Heart left ventricle (tissue), 16 donors: ENCODE measurements at regions of chr2 and their contacts with region 1.

Region 1: DNA sequence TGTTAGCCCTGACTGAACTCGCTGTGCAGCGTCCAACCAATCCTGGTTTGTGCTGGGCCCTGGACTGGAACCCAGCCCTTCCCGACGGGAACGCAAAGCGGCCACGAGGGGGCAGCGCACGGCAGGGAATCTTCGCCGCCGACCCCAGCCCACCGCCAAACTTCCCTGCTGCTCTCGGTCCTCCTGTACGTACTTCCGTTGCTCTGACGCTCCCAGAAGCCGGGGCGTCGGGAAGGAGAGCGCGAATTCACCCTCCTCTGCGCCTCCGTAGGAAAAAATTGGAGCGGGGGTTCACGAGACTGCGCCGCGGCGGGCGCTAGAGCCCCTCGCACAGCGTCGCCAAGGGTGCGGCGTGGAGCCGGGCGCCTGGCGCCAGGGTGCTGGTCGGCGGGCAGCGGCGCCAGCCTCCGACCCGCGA is 948 bp upstream of the SH3RF3 start:
- DNase-seq: peak; percentile 80 to 90 (median 86)
- ATAC-seq: peak; percentile 75 to 91 (median 89)
- H3K4me3 ChIP-seq: peak overlapping the region; percentile 64 to 80 (median 73)
- H3K27ac ChIP-seq: peak overlapping the region; percentile 55 to 86 (median 78)
- H3K4me1 ChIP-seq: peaks cover 0 to 35% (median 18%) of the 10 kb centered on the region in 12 donors
- H3K27me3 ChIP-seq: peaks cover 0 to 15% (median 0%) of the 10 kb centered on the region in 9 donors
- CTCF ChIP-seq: peak; percentile 82 to 97 (median 94)
- POLR2A ChIP-seq: no peak

Region 2: GRCh38 chr2:108960006-108960405 is 168.1 kb before region 1 on chr2:
- intact Hi-C with region 1: no loop called
- DNase-seq: no peak
- ATAC-seq: no peak
- H3K4me3 ChIP-seq: no peak overlapping the region
- H3K27ac ChIP-seq: no peak overlapping the region
- H3K4me1 ChIP-seq: peaks cover 0 to 25% (median 0%) of the 10 kb centered on the region in 12 donors
- H3K27me3 ChIP-seq: no peaks in the 10 kb centered on the region
- CTCF ChIP-seq: no peak
- POLR2A ChIP-seq: no peak

Region 3: GRCh38 chr2:109031476-109032228 is 96.4 kb before region 1 on chr2:
- intact Hi-C with region 1: no loop called
- DNase-seq: peak; percentile 24 to 75 (median 48)
- ATAC-seq: peak in 3 of 4 donors; percentile 70 to 80 (median 74)
- H3K4me3 ChIP-seq: peak overlapping the region; percentile 7 to 63 (median 52)
- H3K27ac ChIP-seq: peak overlapping the region in 1 of 12 donors; percentile 87
- H3K4me1 ChIP-seq: peaks cover 0 to 25% (median 5%) of the 10 kb centered on the region in 12 donors
- H3K27me3 ChIP-seq: peaks cover 0 to 6% (median 0%) of the 10 kb centered on the region in 9 donors
- CTCF ChIP-seq: peak in 1 of 12 donors; percentile 14
- POLR2A ChIP-seq: no peak

Region 4: DNA sequence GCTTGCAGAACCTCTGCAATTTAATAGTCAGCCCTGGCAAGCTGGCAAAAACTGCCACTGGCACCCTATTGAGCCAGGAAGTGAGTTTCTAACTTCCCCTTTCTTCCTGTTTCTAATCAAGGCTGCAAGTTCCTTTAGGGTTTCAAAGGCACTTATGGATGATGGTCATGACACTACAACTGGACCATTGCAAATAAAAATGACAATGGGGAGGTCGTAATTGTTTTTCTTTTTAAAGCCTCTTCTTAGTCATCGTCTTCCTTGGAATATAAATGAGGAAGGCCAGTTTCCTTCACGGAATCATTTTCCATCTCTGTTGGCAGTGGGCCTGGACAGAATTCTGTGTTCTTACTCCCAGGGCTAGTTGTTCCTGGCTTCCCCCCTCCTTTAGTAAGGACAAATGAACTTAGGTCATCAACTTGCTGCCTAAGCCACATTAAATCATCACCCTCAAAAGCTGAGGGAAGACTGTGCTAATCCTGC is 36.7 kb after region 1 on chr2:
- intact Hi-C with region 1: loop called in 3 of 10 experiments (anchors 2 to 5 kb)
- DNase-seq: peak in 3 of 5 donors; percentile 49 to 64 (median 51)
- ATAC-seq: peak in 3 of 4 donors; percentile 25 to 62 (median 33)
- H3K4me3 ChIP-seq: no peak overlapping the region
- H3K27ac ChIP-seq: peak overlapping the region in 8 of 12 donors; percentile 0 to 26 (median 10)
- H3K4me1 ChIP-seq: peaks cover 0 to 41% (median 24%) of the 10 kb centered on the region in 12 donors
- H3K27me3 ChIP-seq: no peaks in the 10 kb centered on the region
- CTCF ChIP-seq: no peak
- POLR2A ChIP-seq: no peak

Region 5: DNA sequence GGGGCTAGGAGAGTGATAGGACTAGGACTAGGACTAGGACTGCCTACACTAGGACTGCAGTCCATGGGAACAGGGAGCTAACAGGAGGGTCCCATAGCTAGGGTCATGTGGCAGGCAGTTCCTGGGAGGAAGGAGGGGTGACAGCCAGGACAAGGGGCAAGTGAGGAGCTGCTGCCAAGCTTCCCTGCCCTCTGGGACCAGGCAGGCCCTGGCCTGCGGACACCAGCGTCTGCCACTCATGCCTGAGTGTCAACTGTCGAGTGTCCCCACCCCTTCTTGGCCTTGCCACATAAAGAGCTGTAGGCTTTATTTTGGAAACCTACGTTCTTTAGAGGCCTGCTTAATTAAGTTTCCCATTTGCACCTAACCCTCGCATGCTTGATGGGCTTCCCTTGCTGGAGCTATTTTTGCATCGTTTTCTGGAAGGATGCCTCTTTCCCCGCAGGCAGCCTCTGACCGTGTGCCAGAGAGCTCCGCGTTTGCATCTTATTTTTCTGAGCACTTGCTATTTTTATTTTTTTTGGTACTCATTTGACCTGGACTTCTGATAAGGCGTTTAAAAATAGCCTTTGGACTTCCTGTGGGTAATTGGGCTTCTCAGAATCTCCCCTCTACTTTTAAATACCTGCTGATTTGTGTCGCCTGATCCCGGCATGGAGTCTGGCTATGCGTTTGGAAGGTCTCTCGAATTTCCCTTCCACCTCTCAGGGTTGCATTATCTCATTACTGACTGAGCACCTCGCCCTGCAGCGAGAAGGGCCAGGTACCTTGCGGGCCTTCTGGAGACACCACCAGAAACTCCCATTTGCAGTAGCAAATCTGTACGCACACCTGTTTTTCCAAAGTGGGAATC is 67.4 kb after region 1 on chr2:
- intact Hi-C with region 1: loop called in 4 of 10 experiments (anchors 2 to 10 kb)
- DNase-seq: peak in 4 of 5 donors; percentile 49 to 75 (median 62)
- ATAC-seq: peak; percentile 66 to 87 (median 82)
- H3K4me3 ChIP-seq: no peak overlapping the region
- H3K27ac ChIP-seq: peak overlapping the region in 11 of 12 donors; percentile 50 to 76 (median 61)
- H3K4me1 ChIP-seq: peaks cover 4 to 57% (median 34%) of the 10 kb centered on the region in 12 donors
- H3K27me3 ChIP-seq: no peaks in the 10 kb centered on the region
- CTCF ChIP-seq: no peak
- POLR2A ChIP-seq: no peak

Region 6: DNA sequence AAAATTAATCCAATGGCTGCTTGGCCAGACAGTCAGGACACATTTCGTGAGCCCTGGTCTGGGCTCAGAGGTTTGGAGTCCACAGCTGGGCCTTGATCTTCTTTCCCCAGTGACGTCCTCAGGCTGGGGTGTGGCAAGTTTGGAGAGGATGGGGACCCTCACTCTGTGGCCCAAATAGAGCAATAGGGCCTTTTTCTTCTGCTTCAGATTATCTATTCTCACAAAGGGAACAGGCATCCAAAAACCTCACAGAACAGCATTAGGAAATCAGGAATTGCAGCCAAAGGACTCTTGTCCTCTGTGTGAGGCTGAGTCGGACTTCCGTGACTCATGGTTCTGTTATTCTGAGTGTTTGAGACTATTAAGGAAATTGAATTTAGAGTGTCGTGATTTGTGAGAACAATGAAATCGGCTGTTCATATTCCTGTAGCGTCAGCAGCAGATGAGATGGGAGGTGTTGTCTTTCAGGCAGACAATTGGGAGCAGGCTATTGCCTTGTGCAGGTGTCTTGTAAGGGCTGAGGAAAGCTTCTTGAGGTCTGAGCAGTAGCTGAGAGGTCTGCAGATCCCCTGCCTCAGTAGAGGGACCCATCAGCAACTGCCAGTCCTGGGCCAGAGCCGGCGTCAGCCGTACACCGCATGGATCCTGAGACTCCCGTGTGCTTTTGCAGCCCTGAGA is 114.7 kb after region 1 on chr2:
- intact Hi-C with region 1: loop called in 1 of 10 experiments (anchors 10 kb)
- DNase-seq: peak in 1 of 5 donors; percentile 50
- ATAC-seq: peak in 3 of 4 donors; percentile 52 to 83 (median 64)
- H3K4me3 ChIP-seq: no peak overlapping the region
- H3K27ac ChIP-seq: peak overlapping the region; percentile 40 to 92 (median 80)
- H3K4me1 ChIP-seq: peaks cover 17 to 80% (median 56%) of the 10 kb centered on the region in 12 donors
- H3K27me3 ChIP-seq: no peaks in the 10 kb centered on the region
- CTCF ChIP-seq: no peak
- POLR2A ChIP-seq: no peak

Region 7: GRCh38 chr2:109318150-109318948 is 190.3 kb after region 1 on chr2:
- intact Hi-C with region 1: loop called in 3 of 10 experiments (anchors 2 to 10 kb)
- DNase-seq: peak; percentile 59 to 90 (median 80)
- ATAC-seq: peak; percentile 40 to 76 (median 70)
- H3K4me3 ChIP-seq: peak overlapping the region in 7 of 12 donors; percentile 7 to 28 (median 14)
- H3K27ac ChIP-seq: peak overlapping the region; percentile 58 to 81 (median 74)
- H3K4me1 ChIP-seq: peaks cover 22 to 61% (median 46%) of the 10 kb centered on the region in 12 donors
- H3K27me3 ChIP-seq: no peaks in the 10 kb centered on the region
- CTCF ChIP-seq: peak in 7 of 12 donors; percentile 12 to 45 (median 14)
- POLR2A ChIP-seq: no peak

Region 8: DNA sequence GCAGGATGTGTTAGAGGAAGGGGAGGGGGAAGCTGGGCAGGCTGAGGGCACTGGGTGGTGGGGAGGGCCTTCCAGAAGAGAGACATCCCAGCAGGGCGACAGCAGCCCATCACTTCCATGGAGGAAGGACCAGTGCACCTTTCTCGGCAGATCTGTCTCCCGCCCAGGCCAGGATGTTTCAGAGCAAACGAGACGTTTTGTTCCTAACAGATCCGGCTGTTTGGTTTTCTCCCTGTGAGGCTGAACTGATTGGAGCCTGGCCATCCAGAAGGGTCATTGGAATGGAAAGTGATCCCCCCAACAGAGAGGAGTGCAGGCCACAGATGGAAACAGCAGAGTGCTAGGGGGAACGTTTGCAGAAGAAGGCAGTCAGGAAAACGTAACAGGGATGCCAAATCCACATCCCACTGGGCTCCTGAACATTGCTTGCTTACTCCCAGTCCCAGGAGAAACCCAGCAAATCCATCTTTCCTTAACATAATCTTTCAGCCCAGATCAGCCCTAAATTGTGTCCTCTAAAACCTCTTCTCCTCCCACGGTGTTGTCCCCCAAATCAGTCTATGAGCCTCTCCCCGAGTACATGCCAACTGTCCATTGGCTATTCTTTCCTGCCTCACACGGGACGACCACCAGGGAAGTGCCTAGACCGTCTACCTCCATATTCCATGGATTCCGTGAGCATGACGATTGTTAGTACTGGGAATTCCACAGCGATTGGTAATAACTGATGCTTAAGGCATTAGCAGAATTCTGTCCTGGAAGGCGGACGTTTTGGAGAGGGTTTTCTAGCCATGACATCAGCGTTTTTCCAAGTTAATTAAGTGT is 358.9 kb after region 1 on chr2:
- intact Hi-C with region 1: loop called in 1 of 10 experiments (anchors 5 kb)
- DNase-seq: peak in 2 of 5 donors; percentile 12 to 19
- ATAC-seq: no peak
- H3K4me3 ChIP-seq: no peak overlapping the region
- H3K27ac ChIP-seq: no peak overlapping the region
- H3K4me1 ChIP-seq: peaks cover 0 to 24% (median 20%) of the 10 kb centered on the region in 12 donors
- H3K27me3 ChIP-seq: no peaks in the 10 kb centered on the region
- CTCF ChIP-seq: no peak
- POLR2A ChIP-seq: no peak